ENCODE measurements at regions of chr15 and their contacts with region 1.

Region 1: GRCh38 chr15:63157118-63157843 is at the start of gene RPS27L:
- DNase-seq: peak; percentile 95
- H3K4me3 ChIP-seq: peak within 1 kb of the TSS; percentile 78 to 93 (median 89)
- H3K27ac ChIP-seq: peak within 1 kb of the TSS; percentile 93 to 99 (median 97)
- H3K4me1 ChIP-seq: peaks cover 0 to 22% (median 18%) of the 10 kb centered on the region in 4 donors
- H3K27me3 ChIP-seq: no peaks in the 10 kb centered on the region
- CTCF ChIP-seq: no peak
- EP300 ChIP-seq: no peak
- POLR2A ChIP-seq: peak; percentile 84 to 90
- total RNA-seq, gene RPS27L: 63.3 to 200 (median 143) TPM

Region 2: GRCh38 chr15:63122002-63122893 is 35.0 kb before region 1 on chr15:
- intact Hi-C with region 1: loop called (anchors 2 kb)
- DNase-seq: peak; percentile 93
- H3K4me3 ChIP-seq: peak overlapping the region; percentile 66 to 99 (median 83)
- H3K27ac ChIP-seq: peak overlapping the region; percentile 89 to 94 (median 91)
- H3K4me1 ChIP-seq: peaks cover 0 to 13% (median 2%) of the 10 kb centered on the region in 4 donors
- H3K27me3 ChIP-seq: no peaks in the 10 kb centered on the region
- CTCF ChIP-seq: peak in 1 of 4 experiments; percentile 15
- EP300 ChIP-seq: no peak
- POLR2A ChIP-seq: no peak

Region 3: DNA sequence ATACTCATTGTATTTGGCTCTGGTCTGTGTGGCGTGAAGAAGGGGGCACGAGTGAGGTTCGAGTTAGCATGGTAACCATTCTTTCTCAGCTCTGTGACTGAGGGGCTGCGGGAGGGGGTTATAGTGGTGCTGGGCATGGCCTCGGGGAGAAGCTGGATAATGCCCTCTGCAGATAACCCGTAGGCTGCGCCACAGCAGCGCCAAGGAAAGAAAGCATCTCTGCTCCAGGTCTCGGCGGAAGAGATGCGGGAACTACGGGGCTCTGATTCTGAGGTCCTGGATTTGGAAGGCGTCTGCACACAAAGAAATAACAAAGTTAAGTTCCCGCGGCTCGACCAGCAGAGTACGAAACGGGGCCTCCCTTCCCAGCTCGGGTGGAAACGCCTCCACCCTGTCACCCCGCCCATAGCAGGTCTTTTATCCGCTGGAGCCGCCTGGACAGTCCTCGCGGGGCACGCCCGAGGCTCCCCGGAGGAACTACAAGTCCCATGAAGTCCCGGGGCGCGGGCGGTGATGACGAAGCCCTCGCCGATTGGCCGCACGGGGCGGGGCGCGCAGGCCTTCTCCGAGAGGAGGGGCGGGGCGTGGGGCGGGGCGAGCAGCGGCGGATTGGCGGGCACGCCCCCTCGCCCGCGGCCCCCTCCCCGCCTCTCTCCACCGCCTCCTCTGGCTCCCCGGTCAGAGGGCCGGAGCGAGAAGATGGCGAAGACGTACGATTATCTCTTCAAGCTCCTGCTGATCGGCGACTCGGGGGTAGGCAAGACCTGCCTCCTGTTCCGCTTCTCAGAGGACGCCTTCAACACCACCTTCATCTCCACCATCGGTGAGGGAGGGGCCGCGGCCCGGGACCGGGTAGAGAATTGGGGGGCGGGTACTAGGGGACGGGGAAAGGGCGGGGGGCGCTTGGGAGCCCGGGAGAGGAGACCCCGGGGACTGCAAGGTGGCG is 31.9 kb after region 1 on chr15 and contains the start of gene RAB8B:
- intact Hi-C with region 1: loop called (anchors 1 kb)
- DNase-seq: peak; percentile 100
- H3K4me3 ChIP-seq: peak within 1 kb of the TSS; percentile 81 to 95 (median 86)
- H3K27ac ChIP-seq: peak within 1 kb of the TSS; percentile 85 to 91 (median 88)
- H3K4me1 ChIP-seq: peaks cover 0 to 35% (median 18%) of the 10 kb centered on the region in 4 donors
- H3K27me3 ChIP-seq: no peaks in the 10 kb centered on the region
- CTCF ChIP-seq: no peak
- EP300 ChIP-seq: no peak
- POLR2A ChIP-seq: peak; percentile 43 to 62
- total RNA-seq, gene RAB8B: 21.7 to 30.4 (median 29.8) TPM

Region 4: GRCh38 chr15:63277038-63277892 is 120.0 kb after region 1 on chr15 and contains the start of gene APH1B:
- intact Hi-C with region 1: loop called (anchors 1 kb)
- DNase-seq: peak; percentile 91
- H3K4me3 ChIP-seq: peak within 1 kb of the TSS; percentile 81 to 97 (median 94)
- H3K27ac ChIP-seq: peak within 1 kb of the TSS; percentile 83 to 90 (median 90)
- H3K4me1 ChIP-seq: peaks cover 0 to 14% (median 6%) of the 10 kb centered on the region in 4 donors
- H3K27me3 ChIP-seq: no peaks in the 10 kb centered on the region
- CTCF ChIP-seq: no peak
- EP300 ChIP-seq: no peak
- POLR2A ChIP-seq: peak in 1 of 2 donors; percentile 19
- total RNA-seq, gene APH1B: 7.9 to 11.0 (median 9.9) TPM

Region 5: DNA sequence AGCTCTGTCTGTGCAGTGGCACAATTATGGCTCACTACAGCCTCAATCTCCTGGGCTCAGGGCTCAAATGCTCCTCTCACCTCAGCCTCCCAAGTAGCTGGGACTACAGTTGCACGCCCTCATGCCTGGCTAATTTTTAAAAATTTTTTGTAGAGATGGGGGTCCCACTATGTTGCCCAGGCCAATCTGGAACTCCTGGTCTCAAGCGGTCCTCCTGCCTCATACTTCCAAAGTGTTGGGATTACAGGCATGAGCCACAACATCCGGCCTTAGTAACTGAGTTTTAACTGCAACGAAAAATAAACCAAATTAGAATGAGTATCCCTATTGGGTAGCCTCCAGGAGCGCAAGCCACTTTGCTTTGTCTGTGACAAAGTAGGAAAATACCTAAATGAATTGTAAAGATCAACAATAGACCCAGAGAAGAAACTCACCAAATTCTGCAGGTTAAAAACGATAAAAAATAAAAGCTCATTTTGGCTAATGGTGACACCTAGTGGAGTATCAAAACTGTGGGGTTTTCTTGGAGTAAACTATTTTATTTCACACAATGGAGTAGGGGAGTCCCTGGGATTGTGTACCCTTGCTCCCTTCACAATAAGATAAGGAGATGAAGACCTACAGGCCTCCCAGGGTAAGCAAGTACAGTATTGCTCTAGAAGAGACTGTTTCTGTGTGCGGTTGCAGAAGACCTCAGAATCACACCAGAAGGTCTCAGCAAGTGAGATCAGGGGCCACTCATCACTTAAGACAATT is 245.4 kb after region 1 on chr15:
- intact Hi-C with region 1: loop called (anchors 2 kb)
- DNase-seq: no peak
- H3K4me3 ChIP-seq: no peak overlapping the region
- H3K27ac ChIP-seq: no peak overlapping the region
- H3K4me1 ChIP-seq: no peaks in the 10 kb centered on the region
- H3K27me3 ChIP-seq: no peaks in the 10 kb centered on the region
- CTCF ChIP-seq: peak; percentile 5 to 69 (median 59)
- EP300 ChIP-seq: no peak
- POLR2A ChIP-seq: no peak

Measured in sigmoid colon (tissue), 7 donors.